ENCODE measurements at regions of chr1 and their contacts with region 1.

Region 1: GRCh38 chr1:226083302-226084101 is 21.0 kb downstream of the H3-3A start:
- DNase-seq: peak; percentile 60 to 94
- H3K4me3 ChIP-seq: peak overlapping the region; percentile 83 to 92
- H3K27ac ChIP-seq: peak overlapping the region; percentile 75 to 85
- H3K4me1 ChIP-seq: peaks cover 4 to 11% of the 10 kb centered on the region in 2 donors
- H3K27me3 ChIP-seq: no peaks in the 10 kb centered on the region
- CTCF ChIP-seq: peak in 2 of 3 experiments; percentile 13 to 20

Region 2: DNA sequence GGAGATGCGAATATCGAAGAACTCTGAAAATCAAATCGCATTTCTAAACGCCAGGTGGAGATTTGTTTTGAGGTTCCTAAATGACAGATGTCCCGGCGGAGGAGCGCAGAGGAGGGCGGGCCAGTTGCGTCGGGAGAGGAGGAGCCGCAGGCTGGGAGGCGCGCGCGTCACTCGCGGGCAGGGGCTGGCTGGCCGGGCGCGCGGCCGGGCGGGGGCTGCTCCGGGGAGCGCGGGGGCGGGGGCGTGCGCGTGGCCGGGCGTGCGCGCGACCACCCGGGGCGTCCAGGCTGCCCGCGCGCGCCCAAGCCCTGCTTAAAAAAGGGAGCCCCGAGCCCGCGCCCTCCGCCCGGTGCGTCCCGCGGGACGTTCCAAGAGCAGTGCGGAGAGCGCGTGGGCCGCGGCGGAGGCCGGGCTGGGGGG is 26.3 kb after region 1 on chr1:
- intact Hi-C with region 1: loop called (anchors 1 kb)
- DNase-seq: peak; percentile 52 to 95
- H3K4me3 ChIP-seq: peak overlapping the region; percentile 56 to 72
- H3K27ac ChIP-seq: peak overlapping the region; percentile 92 to 98
- H3K4me1 ChIP-seq: peaks cover 14 to 38% of the 10 kb centered on the region in 2 donors
- H3K27me3 ChIP-seq: no peaks in the 10 kb centered on the region
- CTCF ChIP-seq: peak in 1 of 3 experiments; percentile 29

Region 3: DNA sequence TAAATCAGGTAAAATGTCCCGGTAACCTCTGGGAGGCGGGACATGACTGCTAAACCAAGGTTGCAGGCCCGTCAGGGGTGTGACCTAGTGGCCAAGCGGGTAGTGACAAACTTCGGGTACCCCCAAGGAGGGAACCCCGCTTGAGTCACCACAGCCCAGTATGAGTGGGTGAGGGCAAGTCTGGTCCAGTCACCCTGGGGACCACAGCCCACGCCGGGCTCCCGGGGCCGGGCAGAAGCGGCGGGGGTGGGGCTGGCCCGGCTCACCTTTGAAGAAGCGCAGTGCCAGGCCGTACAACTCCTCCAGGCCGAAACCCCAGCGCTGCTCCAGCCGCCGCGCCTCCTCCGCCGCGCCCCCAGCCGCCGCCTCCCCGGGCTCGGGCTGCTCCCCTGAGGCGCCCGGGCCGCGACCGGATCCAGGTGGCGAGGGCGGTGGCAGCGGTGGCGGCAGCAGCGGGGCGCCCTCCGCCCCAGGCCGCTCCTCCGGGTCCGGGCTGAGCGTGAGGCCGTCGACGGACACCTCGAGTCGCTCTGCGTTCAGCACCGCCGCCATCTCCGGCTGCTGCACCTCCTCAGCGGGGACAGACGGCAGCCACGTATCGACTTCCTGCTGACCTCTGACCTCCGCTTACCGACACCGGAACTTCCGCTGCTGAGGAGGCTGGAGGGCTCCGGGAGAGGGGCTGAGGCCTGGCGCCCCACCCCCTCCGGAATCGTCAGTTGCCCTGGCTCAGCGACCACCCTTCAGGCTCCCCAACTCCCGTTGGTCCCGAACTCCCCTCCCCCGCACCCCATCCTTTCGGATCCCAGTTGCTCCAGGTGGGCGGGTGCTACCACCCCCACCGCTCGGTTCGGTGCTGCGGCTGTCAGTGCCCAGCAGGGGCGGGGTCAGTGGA is 102.9 kb after region 1 on chr1 and contains the start of gene ACBD3:
- intact Hi-C with region 1: loop called (anchors 5 kb)
- DNase-seq: peak; percentile 57 to 93
- H3K4me3 ChIP-seq: peak within 1 kb of the TSS; percentile 96 to 100
- H3K27ac ChIP-seq: peak within 1 kb of the TSS; percentile 87 to 98
- H3K4me1 ChIP-seq: peaks cover 6 to 17% of the 10 kb centered on the region in 2 donors
- H3K27me3 ChIP-seq: no peaks in the 10 kb centered on the region
- CTCF ChIP-seq: no peak
- total RNA-seq, gene ACBD3: 31.5 TPM

Region 4: GRCh38 chr1:226411619-226412018 is 328.1 kb after region 1 on chr1:
- intact Hi-C with region 1: no loop called
- DNase-seq: peak; percentile 34 to 80
- H3K4me3 ChIP-seq: no peak overlapping the region
- H3K27ac ChIP-seq: peak overlapping the region in 1 of 2 donors; percentile 52
- H3K4me1 ChIP-seq: peaks cover 4 to 9% of the 10 kb centered on the region in 2 donors
- H3K27me3 ChIP-seq: no peaks in the 10 kb centered on the region
- CTCF ChIP-seq: no peak